Activated T-helper 1 cell treated with anti-CD3 and anti-CD28 coated beads, Interleukin-12 subunit alpha, Interleukin-12 subunit beta, Interleukin-2, Interleukin-4 antibody, amounts not matched to agents 30 ng/mL and 10 ng/mL and 1 ng/mL, durations not matched to agents 14 hours and 24 hours and 36 hours (primary cell): ENCODE measurements at regions of chr16 and their contacts with region 1.

Region 1: DNA sequence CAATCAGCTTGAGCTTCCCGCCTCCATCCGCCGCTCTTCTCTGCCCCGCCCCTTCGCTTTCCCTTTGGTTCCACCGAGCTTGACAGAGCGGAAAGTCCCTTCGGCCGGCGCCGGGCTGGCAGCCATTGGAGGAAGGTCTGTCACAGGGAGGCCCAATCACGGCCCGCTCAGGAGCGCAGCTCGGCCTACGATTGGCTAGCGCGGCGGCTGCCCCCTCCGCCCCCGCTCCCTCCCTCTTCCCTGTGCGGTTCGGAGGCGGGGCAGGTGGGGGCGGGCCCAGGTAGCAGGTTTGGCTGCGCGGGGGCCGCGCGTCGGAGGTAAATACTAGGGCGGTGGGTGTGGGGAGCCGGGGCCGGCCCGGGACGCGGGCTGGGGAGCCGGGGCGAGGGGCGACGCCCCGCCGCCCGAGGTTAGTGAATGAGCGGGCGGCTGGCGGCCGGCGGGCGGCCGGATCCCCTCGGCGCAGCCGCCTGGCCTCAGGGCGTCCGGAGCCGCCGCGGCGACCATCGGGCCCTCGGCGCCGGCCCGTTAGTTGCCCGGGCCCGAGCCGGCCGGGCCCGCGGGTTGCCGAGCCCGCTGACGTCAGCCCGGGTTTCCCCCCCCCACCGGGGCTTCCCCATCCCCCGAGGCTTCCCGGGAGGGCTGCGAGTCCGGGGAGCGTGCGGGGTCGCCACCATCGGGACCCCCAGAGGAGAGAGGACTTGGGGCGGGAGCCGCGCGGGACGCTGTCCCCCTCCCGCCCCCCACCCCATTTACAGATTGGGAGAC is at the start of gene CYLD:
- DNase-seq: peak; percentile 100
- H3K4me3 Mint-ChIP-seq: peak within 1 kb of the TSS; percentile 86
- H3K27ac Mint-ChIP-seq: peak within 1 kb of the TSS; percentile 93
- H3K4me1 Mint-ChIP-seq: peaks cover 64% of the 10 kb centered on the region
- H3K27me3 Mint-ChIP-seq: no peaks in the 10 kb centered on the region
- total RNA-seq, gene CYLD: 219 and 223 TPM in 2 replicates

Region 2: DNA sequence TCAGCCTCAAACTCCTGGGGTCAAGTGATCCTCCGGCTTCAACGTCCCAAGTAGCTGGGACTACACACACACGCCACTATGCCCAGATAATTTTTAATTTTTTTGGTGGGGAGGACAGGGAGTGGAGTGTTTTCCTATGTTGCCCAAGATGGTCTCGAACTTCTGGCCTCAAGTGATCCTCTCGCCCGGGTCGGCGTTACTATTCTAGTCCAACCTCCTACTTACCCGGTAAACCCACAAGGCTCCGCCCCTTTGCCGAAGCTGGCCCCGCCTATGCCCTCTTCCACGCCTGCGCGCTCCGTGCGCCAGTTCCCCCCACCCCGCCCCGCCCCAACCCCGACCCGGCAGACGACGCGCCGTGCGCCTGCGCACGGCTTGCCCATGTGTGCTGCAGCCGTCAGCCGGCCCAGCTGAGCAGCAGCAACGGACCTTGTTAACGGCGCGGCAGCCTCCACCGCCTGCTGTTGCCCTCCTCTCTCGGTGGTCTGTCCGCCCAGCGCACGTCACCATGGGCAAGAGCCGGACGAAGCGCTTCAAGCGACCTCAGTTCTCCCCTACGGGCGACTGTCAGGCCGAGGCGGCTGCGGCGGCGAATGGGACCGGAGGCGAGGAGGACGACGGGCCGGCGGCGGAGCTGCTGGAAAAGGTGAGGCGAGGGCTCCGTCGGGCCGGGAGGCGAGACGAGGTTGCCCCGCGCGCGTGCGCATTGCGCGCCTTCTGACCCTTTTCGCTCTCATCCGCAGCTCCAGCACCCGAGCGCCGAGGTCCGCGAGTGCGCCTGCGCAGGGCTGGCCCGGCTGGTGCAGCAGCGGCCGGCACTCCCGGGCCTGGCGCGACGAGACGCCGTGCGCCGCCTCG is 676.1 kb before region 1 on chr16 and contains the start of gene HEATR3:
- intact Hi-C with region 1: loop called (anchors 5 kb)
- DNase-seq: peak; percentile 93
- H3K4me3 Mint-ChIP-seq: peak within 1 kb of the TSS; percentile 85
- H3K27ac Mint-ChIP-seq: peak within 1 kb of the TSS; percentile 90
- H3K4me1 Mint-ChIP-seq: peaks cover 39% of the 10 kb centered on the region
- H3K27me3 Mint-ChIP-seq: no peaks in the 10 kb centered on the region
- total RNA-seq, gene HEATR3: 29.1 and 30.7 TPM in 2 replicates

Region 3: GRCh38 chr16:50273681-50274325 is 468.2 kb before region 1 on chr16:
- intact Hi-C with region 1: loop called (anchors 5 kb)
- DNase-seq: peak; percentile 20
- H3K4me3 Mint-ChIP-seq: peak overlapping the region; percentile 95
- H3K27ac Mint-ChIP-seq: peak overlapping the region; percentile 98
- H3K4me1 Mint-ChIP-seq: peaks cover 95% of the 10 kb centered on the region
- H3K27me3 Mint-ChIP-seq: no peaks in the 10 kb centered on the region

Region 4: GRCh38 chr16:50681021-50681885 is 60.7 kb before region 1 on chr16 and contains the start of gene SNX20:
- intact Hi-C with region 1: loop called (anchors 1 kb)
- DNase-seq: peak; percentile 41
- H3K4me3 Mint-ChIP-seq: peak within 1 kb of the TSS; percentile 82
- H3K27ac Mint-ChIP-seq: peak within 1 kb of the TSS; percentile 85
- H3K4me1 Mint-ChIP-seq: peaks cover 90% of the 10 kb centered on the region
- H3K27me3 Mint-ChIP-seq: no peaks in the 10 kb centered on the region
- total RNA-seq, gene SNX20: 34.3 TPM in 2 replicates

Region 5: DNA sequence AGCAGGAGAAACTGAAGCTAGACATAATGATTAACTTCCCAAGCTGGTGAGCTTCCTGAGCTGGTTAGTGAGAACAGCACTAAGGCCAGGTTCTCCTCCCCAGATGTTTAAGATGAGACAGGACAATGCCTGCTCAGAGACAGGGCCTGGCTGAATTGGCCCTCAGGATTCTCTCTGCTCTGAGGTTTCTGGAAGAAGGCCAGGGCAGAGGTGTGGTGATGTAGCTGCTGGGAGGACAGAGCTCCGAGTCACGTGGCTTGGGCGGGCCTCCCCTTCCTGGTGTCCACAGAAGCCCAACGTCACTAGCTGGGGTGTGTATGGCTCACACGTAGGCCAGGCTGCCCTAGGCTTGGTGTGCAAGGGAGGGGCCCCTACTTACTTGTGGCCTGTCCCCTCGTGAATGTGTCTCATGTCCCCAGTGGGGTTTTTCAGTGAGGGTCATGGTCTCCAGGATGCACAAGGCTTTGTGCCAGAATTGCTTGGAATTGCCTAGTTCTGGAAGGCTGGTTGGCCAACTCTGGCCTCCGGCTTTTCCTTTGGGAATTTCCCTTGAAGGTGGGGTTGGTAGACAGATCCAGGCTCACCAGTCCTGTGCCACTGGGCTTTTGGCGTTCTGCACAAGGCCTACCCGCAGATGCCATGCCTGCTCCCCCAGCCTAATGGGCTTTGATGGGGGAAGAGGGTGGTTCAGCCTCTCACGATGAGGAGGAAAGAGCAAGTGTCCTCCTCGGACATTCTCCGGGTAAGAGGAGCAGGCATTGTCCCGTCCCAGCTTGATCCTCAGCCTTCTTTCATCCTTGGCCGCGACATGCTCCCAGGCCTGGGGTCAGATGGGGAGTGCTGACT is 45.2 kb before region 1 on chr16:
- intact Hi-C with region 1: loop called (anchors 5 kb)
- DNase-seq: peak; percentile 21
- H3K4me3 Mint-ChIP-seq: no peak overlapping the region
- H3K27ac Mint-ChIP-seq: peak overlapping the region; percentile 86
- H3K4me1 Mint-ChIP-seq: peaks cover 85% of the 10 kb centered on the region
- H3K27me3 Mint-ChIP-seq: peaks cover 3% of the 10 kb centered on the region

Region 6: GRCh38 chr16:50709053-50709684 is 32.8 kb before region 1 on chr16:
- intact Hi-C with region 1: loop called (anchors 2 kb)
- DNase-seq: no peak
- H3K4me3 Mint-ChIP-seq: peak overlapping the region; percentile 35
- H3K27ac Mint-ChIP-seq: peak overlapping the region; percentile 81
- H3K4me1 Mint-ChIP-seq: peaks cover 47% of the 10 kb centered on the region
- H3K27me3 Mint-ChIP-seq: no peaks in the 10 kb centered on the region

Region 7: GRCh38 chr16:50763211-50763610 is 21.2 kb after region 1 on chr16:
- intact Hi-C with region 1: loop called (anchors 2 kb)
- DNase-seq: no peak
- H3K4me3 Mint-ChIP-seq: no peak overlapping the region
- H3K27ac Mint-ChIP-seq: peak overlapping the region; percentile 13
- H3K4me1 Mint-ChIP-seq: peaks cover 84% of the 10 kb centered on the region
- H3K27me3 Mint-ChIP-seq: no peaks in the 10 kb centered on the region